Activated B cell treated with CpG ODN at 0.5 μM for 24 hours (primary cell): ENCODE measurements at regions of chr3 and their contacts with region 1.

Region 1: GRCh38 chr3:27171113-27171512 is 198.1 kb downstream of the NEK10 start:
- DNase-seq: no peak
- ATAC-seq: peak; percentile 58
- H3K4me3 Mint-ChIP-seq: no peak overlapping the region
- H3K27ac Mint-ChIP-seq: no peak overlapping the region
- H3K4me1 Mint-ChIP-seq: peaks cover 7% of the 10 kb centered on the region
- H3K27me3 Mint-ChIP-seq: no peaks in the 10 kb centered on the region
- CTCF ChIP-seq: no peak

Region 2: GRCh38 chr3:27216955-27217552 is 45.9 kb after region 1 on chr3:
- CTCF ChIA-PET with region 1: no interaction called
- POLR2A ChIA-PET with region 1: no interaction called
- intact Hi-C with region 1: loop called (anchors 1 kb)
- DNase-seq: no peak
- ATAC-seq: no peak
- H3K4me3 Mint-ChIP-seq: no peak overlapping the region
- H3K27ac Mint-ChIP-seq: no peak overlapping the region
- H3K4me1 Mint-ChIP-seq: no peaks in the 10 kb centered on the region
- H3K27me3 Mint-ChIP-seq: peaks cover 2% of the 10 kb centered on the region
- CTCF ChIP-seq: no peak